PC-9 (cell line): ENCODE measurements at regions of chr9 and their contacts with region 1.

Region 1: DNA sequence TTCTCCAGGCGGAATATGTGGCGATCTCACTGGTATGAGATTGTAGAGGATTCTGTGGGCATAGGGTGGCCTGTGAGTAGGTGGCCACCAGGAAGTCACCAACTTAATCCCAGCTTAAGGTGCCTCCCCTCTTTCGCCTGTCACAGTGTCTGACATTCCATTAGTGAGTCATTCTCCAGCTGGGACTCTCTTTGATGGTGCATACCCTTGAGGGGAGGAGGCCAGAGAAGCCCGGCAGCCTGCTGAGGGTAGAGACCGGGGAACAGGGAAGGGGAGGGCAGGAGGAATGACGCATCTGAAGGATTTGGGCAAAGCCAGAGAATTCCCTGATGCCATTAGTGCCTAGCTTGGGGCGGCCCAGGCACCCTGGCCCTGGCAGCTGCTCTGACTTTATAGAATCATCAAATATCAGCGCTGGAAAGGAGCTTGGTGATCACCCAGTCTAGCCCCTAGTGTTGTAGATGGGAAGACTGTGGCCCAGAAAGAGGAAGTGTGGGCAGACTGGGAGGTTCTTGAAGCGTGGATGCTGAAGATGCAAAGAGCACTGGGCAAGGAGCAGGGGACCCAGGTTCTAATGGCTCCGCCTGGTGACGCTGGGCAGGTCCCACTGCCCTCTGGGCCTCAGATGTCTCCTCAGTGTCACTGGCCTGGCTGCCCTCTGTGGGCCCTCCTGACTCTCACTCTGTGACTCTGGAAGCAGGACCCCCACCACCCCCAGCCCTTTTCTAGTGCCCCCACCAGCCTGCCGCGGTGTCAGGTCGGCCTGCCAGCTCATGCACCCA is 41.4 kb downstream of the DAB2IP start:
- DNase-seq: peak; percentile 83 to 91
- H3K4me3 ChIP-seq: no peak overlapping the region
- H3K27ac ChIP-seq: peak overlapping the region; percentile 48; the same call in 1 of the 2 replicates
- H3K4me1 ChIP-seq: peaks cover 14% of the 10 kb centered on the region
- H3K27me3 ChIP-seq: no peaks in the 10 kb centered on the region
- CTCF ChIP-seq: no peak

Region 2: DNA sequence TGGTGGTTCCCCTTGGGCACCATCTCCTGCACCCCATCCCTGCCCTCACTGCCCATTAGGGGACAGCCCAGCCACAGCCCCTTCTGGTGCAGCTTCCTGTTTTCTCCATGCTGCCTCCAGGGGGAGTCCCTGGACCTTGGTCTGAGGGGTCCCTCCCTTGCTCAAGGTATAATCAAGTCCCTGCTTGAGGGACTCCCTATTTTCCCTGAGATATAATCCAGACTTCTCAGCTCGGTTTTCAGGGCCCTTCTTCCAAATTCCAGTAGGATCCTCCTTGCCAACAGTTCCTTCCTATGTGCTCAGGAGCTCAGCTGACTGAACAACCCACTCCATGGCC is 71.7 kb before region 1 on chr9:
- CTCF ChIA-PET with region 1: no interaction called
- POLR2A ChIA-PET with region 1: interaction called, 14 read pairs
- intact Hi-C with region 1: no loop called
- DNase-seq: peak in 1 of 2 experiments; percentile 39
- H3K4me3 ChIP-seq: no peak overlapping the region
- H3K27ac ChIP-seq: no peak overlapping the region
- H3K4me1 ChIP-seq: no peaks in the 10 kb centered on the region
- H3K27me3 ChIP-seq: no peaks in the 10 kb centered on the region
- CTCF ChIP-seq: peak; percentile 59

Region 3: GRCh38 chr9:121634329-121635261 is 58.2 kb before region 1 on chr9:
- CTCF ChIA-PET with region 1: no interaction called
- POLR2A ChIA-PET with region 1: no interaction called
- intact Hi-C with region 1: loop called (anchors 5 kb)
- DNase-seq: peak in 1 of 2 experiments; percentile 39
- H3K4me3 ChIP-seq: no peak overlapping the region
- H3K27ac ChIP-seq: no peak overlapping the region
- H3K4me1 ChIP-seq: peaks cover 9% of the 10 kb centered on the region; the same call in 1 of the 2 replicates
- H3K27me3 ChIP-seq: no peaks in the 10 kb centered on the region
- CTCF ChIP-seq: peak; percentile 60

Region 4: DNA sequence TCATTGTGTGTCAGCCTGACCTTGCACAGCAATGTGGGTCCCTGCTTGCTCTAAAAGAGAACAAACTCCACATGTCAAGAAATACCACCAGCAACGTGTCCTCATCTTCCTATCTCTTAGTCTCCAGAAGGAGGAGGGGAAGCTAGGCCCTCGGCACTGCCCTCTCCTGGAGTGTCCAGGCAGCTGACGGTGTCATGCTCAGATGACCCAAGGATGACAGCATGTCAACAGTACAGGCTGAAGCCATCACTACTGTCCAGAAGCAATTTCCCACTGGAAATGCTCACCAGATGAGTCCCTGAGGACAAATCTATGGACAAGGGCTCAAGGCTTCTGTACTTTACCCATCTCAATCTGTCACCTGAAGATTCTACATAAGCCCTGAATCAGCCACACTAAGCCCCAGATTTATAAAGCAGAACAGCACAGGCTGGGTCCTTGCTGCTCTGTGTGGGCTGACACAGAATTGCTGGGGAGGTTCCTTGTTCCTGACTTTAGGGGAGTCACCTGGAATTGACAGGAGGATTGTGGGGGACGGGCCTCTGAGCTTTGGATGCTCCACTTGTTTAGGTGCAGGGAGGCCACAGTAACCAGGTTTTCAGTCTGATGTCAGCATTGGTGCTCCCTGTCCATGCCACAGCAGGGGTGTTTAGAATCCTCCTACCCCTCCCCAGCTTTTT is 168.8 kb after region 1 on chr9:
- CTCF ChIA-PET with region 1: no interaction called
- POLR2A ChIA-PET with region 1: no interaction called
- intact Hi-C with region 1: loop called (anchors 1 kb)
- DNase-seq: peak in 1 of 2 experiments; percentile 28
- H3K4me3 ChIP-seq: no peak overlapping the region
- H3K27ac ChIP-seq: no peak overlapping the region
- H3K4me1 ChIP-seq: no peaks in the 10 kb centered on the region
- H3K27me3 ChIP-seq: no peaks in the 10 kb centered on the region
- CTCF ChIP-seq: peak; percentile 61